CD8-positive, alpha-beta T cell (primary cell): ENCODE measurements at regions of chr14 and their contacts with region 1.

Region 1: GRCh38 chr14:25436288-25436875 is 386.4 kb upstream of the STXBP6 start:
- DNase-seq: no peak
- ATAC-seq: no peak
- H3K4me3 ChIP-seq: no peak overlapping the region
- H3K4me3 Mint-ChIP-seq: no peak overlapping the region
- H3K27ac ChIP-seq: no peak overlapping the region
- H3K27ac Mint-ChIP-seq: no peak overlapping the region
- H3K4me1 ChIP-seq: no peaks in the 10 kb centered on the region
- H3K4me1 Mint-ChIP-seq: no peaks in the 10 kb centered on the region
- H3K27me3 ChIP-seq: no peaks in the 10 kb centered on the region
- H3K27me3 Mint-ChIP-seq: no peaks in the 10 kb centered on the region
- CTCF ChIP-seq: no peak

Region 2: GRCh38 chr14:25464078-25464477 is 27.7 kb after region 1 on chr14:
- CTCF ChIA-PET with region 1: no interaction called
- POLR2A ChIA-PET with region 1: no interaction called
- intact Hi-C with region 1: loop called in 1 of 2 experiments (anchors 1 kb)
- DNase-seq: no peak
- ATAC-seq: no peak
- H3K4me3 ChIP-seq: no peak overlapping the region
- H3K4me3 Mint-ChIP-seq: no peak overlapping the region
- H3K27ac ChIP-seq: no peak overlapping the region
- H3K27ac Mint-ChIP-seq: no peak overlapping the region
- H3K4me1 ChIP-seq: no peaks in the 10 kb centered on the region
- H3K4me1 Mint-ChIP-seq: no peaks in the 10 kb centered on the region
- H3K27me3 ChIP-seq: peaks cover 0 to 2% of the 10 kb centered on the region in 2 experiments
- H3K27me3 Mint-ChIP-seq: no peaks in the 10 kb centered on the region
- CTCF ChIP-seq: no peak